Testis (tissue), 5 donors: ENCODE measurements at regions of chr16 and their contacts with region 1.

Region 1: GRCh38 chr16:53130159-53131049 is 75.6 kb downstream of the CHD9 start:
- DNase-seq: peak; percentile 97
- H3K4me3 ChIP-seq: peak overlapping the region; percentile 75 to 86
- H3K27ac ChIP-seq: peak overlapping the region; percentile 79 to 90
- H3K4me1 ChIP-seq: peaks cover 8% of the 10 kb centered on the region
- H3K27me3 ChIP-seq: no peaks in the 10 kb centered on the region
- CTCF ChIP-seq: peak; percentile 43 to 83 (median 57)
- POLR2A ChIP-seq: no peak

Region 2: GRCh38 chr16:53041320-53042051 is 88.9 kb before region 1 on chr16:
- intact Hi-C with region 1: no loop called
- DNase-seq: peak; percentile 72
- H3K4me3 ChIP-seq: no peak overlapping the region
- H3K27ac ChIP-seq: peak overlapping the region in 1 of 2 donors; percentile 73
- H3K4me1 ChIP-seq: peaks cover 8% of the 10 kb centered on the region
- H3K27me3 ChIP-seq: no peaks in the 10 kb centered on the region
- CTCF ChIP-seq: no peak
- POLR2A ChIP-seq: no peak

Region 3: GRCh38 chr16:53054670-53055485 is 75.5 kb before region 1 on chr16 and contains the start of gene CHD9:
- intact Hi-C with region 1: loop called (anchors 2 kb)
- DNase-seq: peak; percentile 87
- H3K4me3 ChIP-seq: peak within 1 kb of the TSS; percentile 57 to 66
- H3K27ac ChIP-seq: peak within 1 kb of the TSS; percentile 55 to 70
- H3K4me1 ChIP-seq: no peaks in the 10 kb centered on the region
- H3K27me3 ChIP-seq: no peaks in the 10 kb centered on the region
- CTCF ChIP-seq: peak; percentile 98
- POLR2A ChIP-seq: no peak
- total RNA-seq, gene CHD9: 57.5 to 67.3 TPM

Region 4: GRCh38 chr16:53091466-53092211 is 38.8 kb before region 1 on chr16:
- intact Hi-C with region 1: loop called (anchors 5 kb)
- DNase-seq: peak; percentile 72
- H3K4me3 ChIP-seq: no peak overlapping the region
- H3K27ac ChIP-seq: peak overlapping the region in 1 of 2 donors; percentile 69
- H3K4me1 ChIP-seq: peaks cover 28% of the 10 kb centered on the region
- H3K27me3 ChIP-seq: no peaks in the 10 kb centered on the region
- CTCF ChIP-seq: no peak
- POLR2A ChIP-seq: no peak